Activated CD8-positive, alpha-beta memory T cell treated with anti-CD3 and anti-CD28 coated beads, Interleukin-2, amount 10 ng/mL, durations not matched to agents 7 days and 5 days (primary cell): ENCODE measurements at regions of chr17 and their contacts with region 1.

Region 1: GRCh38 chr17:59753522-59754467 is 46.3 kb downstream of the VMP1 start:
- DNase-seq: no peak
- ATAC-seq: peak; percentile 70
- H3K4me3 Mint-ChIP-seq: peak overlapping the region; percentile 52
- H3K27ac Mint-ChIP-seq: peak overlapping the region; percentile 84
- H3K4me1 Mint-ChIP-seq: peaks cover 62% of the 10 kb centered on the region
- H3K27me3 Mint-ChIP-seq: no peaks in the 10 kb centered on the region

Region 2: DNA sequence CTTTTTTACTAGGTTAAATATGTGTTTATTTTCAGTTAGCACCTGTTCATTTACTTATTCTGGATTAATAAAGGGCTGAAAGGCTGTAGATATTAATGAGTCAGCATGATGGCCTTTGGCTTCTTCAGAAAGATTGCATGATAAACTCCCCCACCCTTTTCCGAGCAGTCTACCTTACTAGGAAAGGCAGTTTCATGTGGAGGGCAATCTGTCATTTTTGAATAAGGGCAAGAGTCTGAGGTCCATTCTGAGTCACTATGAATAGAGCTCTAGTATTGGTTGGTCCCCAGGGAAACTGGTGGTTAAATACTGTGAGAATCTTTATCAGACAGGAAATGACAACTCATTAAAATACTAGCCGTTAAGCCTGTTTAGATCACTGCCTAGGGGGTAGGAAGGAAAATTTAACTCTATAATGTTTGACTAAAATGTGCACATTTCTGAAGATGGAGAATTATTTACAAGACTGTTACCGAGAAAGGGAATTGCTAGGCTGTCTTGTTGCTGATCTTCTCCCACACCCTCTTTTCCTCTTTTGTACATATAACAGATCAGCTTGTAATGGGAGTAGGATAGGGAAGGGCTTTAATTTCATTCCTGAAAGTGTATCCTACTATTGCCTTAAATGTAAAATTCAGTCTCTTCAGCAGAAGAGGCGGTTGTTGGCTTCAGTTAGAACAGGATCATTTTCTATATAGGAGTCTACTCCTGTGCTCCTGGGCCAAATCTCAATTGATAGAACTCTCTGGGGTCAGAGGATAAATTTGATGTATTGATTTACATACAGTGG is 75.6 kb after region 1 on chr17:
- CTCF ChIA-PET with region 1: interaction called, 20 read pairs
- DNase-seq: peak; percentile 80
- ATAC-seq: peak; percentile 78
- H3K4me3 Mint-ChIP-seq: peak overlapping the region; percentile 74
- H3K27ac Mint-ChIP-seq: peak overlapping the region; percentile 98
- H3K4me1 Mint-ChIP-seq: peaks cover 83% of the 10 kb centered on the region
- H3K27me3 Mint-ChIP-seq: no peaks in the 10 kb centered on the region

Region 3: DNA sequence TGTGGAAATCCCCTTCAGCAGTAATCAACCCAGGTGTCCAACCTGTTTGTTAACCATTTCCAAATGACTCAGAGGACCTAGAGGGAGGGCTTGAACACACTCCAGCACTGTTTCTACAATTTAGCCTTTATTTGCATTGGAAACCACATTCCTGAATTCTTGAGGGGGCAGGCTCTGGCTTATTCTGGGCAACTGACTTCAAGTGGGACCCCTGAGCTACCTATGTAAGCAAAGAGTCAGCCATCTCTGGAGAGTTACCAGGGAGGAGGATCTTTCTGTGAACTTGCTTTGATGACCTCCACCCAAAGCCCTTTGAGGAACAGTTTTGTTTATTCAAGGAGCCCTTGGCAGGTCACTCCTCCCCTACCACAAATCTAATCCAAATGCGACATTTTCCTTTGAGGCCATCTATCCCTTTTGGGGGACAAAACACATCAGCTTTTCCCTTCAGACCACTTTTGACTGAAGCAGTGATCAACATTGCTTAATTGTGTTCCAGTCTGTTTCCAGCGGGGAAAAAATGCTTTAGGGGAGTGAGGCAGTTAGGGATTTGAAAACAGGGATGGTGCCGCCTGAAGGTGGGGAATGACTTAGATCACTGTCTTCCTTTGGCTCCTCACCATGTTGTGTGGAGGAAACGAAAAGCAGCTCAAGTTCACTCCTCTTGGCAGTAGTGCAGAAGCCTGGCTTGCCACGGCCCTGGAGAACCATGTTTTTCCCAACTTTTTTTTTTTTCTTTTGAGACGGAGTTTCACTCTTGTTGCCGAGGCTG is 92.8 kb after region 1 on chr17:
- CTCF ChIA-PET with region 1: interaction called, 71 read pairs
- DNase-seq: no peak
- ATAC-seq: peak; percentile 29
- H3K4me3 Mint-ChIP-seq: peak overlapping the region; percentile 13
- H3K27ac Mint-ChIP-seq: peak overlapping the region; percentile 100
- H3K4me1 Mint-ChIP-seq: peaks cover 70% of the 10 kb centered on the region
- H3K27me3 Mint-ChIP-seq: no peaks in the 10 kb centered on the region

Region 4: GRCh38 chr17:59876107-59876506 is 122.3 kb after region 1 on chr17:
- CTCF ChIA-PET with region 1: no interaction called
- DNase-seq: no peak
- ATAC-seq: no peak
- H3K4me3 Mint-ChIP-seq: no peak overlapping the region
- H3K27ac Mint-ChIP-seq: no peak overlapping the region
- H3K4me1 Mint-ChIP-seq: no peaks in the 10 kb centered on the region
- H3K27me3 Mint-ChIP-seq: no peaks in the 10 kb centered on the region

Region 5: GRCh38 chr17:59892924-59893676 is 139.3 kb after region 1 on chr17 and contains the starts of genes RPS6KB1 and TUBD1:
- CTCF ChIA-PET with region 1: interaction called, 22 read pairs
- DNase-seq: peak; percentile 99
- ATAC-seq: peak; percentile 95
- H3K4me3 Mint-ChIP-seq: peak within 1 kb of the TSS; percentile 94
- H3K27ac Mint-ChIP-seq: peak within 1 kb of the TSS; percentile 92
- H3K4me1 Mint-ChIP-seq: peaks cover 57% of the 10 kb centered on the region
- H3K27me3 Mint-ChIP-seq: no peaks in the 10 kb centered on the region
- total RNA-seq, gene RPS6KB1: 52.3 to 58.6 TPM
- total RNA-seq, gene TUBD1: 14.3 to 15.5 TPM